Gastrocnemius medialis (tissue), 4 donors: ENCODE measurements at regions of chr6 and their contacts with region 1.

Region 1: DNA sequence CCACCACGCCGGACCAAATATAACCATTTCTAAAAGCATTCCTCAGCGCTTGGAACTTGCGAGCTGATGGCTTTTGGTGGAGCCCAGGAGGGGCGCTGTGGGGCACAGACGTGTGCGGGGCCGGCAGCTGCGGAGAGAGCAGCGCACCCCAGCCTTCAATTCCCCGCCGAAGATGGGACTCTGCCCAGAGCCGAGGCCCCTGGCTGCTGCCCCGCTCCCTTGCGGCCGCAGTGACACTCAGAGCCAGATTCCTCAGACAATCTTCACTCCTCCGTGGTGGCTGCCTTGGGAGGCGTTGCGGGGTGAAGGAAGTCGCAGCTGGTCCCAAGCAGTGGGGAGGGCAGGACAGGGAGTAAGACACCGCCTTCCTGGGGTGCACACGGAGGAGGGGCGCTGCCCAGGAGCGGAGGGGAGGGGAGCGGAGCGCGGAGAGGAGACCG is 87.7 kb downstream of the TMEM242 start:
- DNase-seq: peak in 1 of 2 donors; percentile 42
- ATAC-seq: peak; percentile 57 to 64
- H3K4me3 ChIP-seq: peak overlapping the region; percentile 57 to 70 (median 61)
- H3K27ac ChIP-seq: peak overlapping the region; percentile 8 to 53 (median 49)
- H3K4me1 ChIP-seq: peaks cover 19 to 26% of the 10 kb centered on the region in 2 donors
- H3K27me3 ChIP-seq: peaks cover 0 to 15% (median 0%) of the 10 kb centered on the region in 3 donors
- CTCF ChIP-seq: peak; percentile 25 to 77 (median 53)
- POLR2A ChIP-seq: no peak

Region 2: GRCh38 chr6:155314092-155314772 is 1921.4 kb before region 1 on chr6 and contains the start of gene TFB1M:
- in situ Hi-C with region 1: no loop called
- intact Hi-C with region 1: loop called (anchors 10 kb)
- DNase-seq: peak; percentile 98
- ATAC-seq: peak; percentile 90 to 91
- H3K4me3 ChIP-seq: peak within 1 kb of the TSS; percentile 84 to 95 (median 88)
- H3K27ac ChIP-seq: peak within 1 kb of the TSS; percentile 87 to 93 (median 91)
- H3K4me1 ChIP-seq: peaks cover 3 to 11% of the 10 kb centered on the region in 2 donors
- H3K27me3 ChIP-seq: no peaks in the 10 kb centered on the region
- CTCF ChIP-seq: no peak
- POLR2A ChIP-seq: peak; percentile 94
- total RNA-seq, gene TFB1M: 13.4 to 34.4 (median 29.2) TPM

Region 3: DNA sequence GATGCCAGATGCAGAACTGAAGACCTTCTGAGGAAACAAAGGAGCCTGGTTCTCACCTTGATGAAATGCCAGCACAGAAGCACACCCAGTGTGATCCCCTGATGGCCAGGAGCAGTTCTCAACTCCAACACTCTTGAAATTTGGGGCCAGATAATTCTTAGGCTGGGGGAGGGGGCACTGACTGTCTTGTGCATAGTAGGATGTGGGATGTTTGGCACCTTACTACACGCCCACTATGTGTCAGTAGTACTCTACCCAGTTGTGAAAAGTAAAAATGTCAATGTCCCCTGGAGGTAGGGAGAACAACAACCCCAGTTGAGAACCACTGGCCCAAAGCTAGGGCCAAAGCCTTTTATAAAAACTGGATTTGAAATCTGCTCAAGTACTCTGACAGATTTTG is 856.8 kb before region 1 on chr6:
- in situ Hi-C with region 1: no loop called
- intact Hi-C with region 1: no loop called
- DNase-seq: no peak
- ATAC-seq: no peak
- H3K4me3 ChIP-seq: no peak overlapping the region
- H3K27ac ChIP-seq: no peak overlapping the region
- H3K4me1 ChIP-seq: no peaks in the 10 kb centered on the region
- H3K27me3 ChIP-seq: no peaks in the 10 kb centered on the region
- CTCF ChIP-seq: no peak
- POLR2A ChIP-seq: no peak

Region 4: GRCh38 chr6:157059781-157060180 is 175.8 kb before region 1 on chr6:
- in situ Hi-C with region 1: no loop called
- intact Hi-C with region 1: no loop called
- DNase-seq: no peak
- ATAC-seq: peak in 1 of 2 donors; percentile 44
- H3K4me3 ChIP-seq: no peak overlapping the region
- H3K27ac ChIP-seq: no peak overlapping the region
- H3K4me1 ChIP-seq: peaks cover 11 to 16% of the 10 kb centered on the region in 2 donors
- H3K27me3 ChIP-seq: no peaks in the 10 kb centered on the region
- CTCF ChIP-seq: no peak
- POLR2A ChIP-seq: no peak

Region 5: DNA sequence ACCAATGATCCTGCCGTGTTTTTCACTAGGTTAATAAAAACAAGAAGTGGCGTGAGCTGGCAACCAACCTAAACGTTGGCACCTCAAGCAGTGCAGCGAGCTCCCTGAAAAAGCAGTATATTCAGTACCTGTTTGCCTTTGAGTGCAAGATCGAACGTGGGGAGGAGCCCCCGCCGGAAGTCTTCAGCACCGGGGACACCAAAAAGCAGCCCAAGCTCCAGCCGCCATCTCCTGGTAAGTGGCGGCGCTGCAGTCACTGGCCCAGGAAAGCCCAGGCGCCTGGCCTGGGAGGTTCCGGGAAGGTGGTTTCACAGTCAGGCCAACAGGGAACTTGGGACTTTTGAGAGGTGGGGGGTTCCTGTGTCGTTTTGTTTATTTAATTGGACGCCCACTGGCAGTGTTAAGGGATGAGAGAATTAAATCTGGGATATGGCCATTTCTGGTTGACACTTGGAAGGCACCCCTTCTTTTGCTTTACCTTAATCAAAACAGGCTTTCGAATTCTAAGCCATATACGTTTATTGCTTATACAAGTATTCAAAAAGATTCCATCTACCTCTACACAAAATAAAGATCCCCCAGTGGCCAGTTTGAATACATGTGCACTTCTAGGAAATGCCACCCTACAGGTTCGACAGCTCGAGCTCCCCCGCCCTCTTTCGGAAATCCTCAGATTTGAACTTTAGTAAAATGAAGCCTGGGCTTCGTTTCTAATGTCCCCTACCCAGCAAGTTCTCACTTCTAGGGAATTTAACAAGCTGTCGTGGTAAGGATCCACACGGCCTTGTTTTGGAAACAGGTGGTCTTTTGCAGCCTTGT is 51.2 kb before region 1 on chr6:
- in situ Hi-C with region 1: no loop called
- intact Hi-C with region 1: loop called (anchors 5 kb)
- DNase-seq: peak; percentile 41 to 65
- ATAC-seq: peak; percentile 22 to 40
- H3K4me3 ChIP-seq: no peak overlapping the region
- H3K27ac ChIP-seq: peak overlapping the region in 3 of 4 donors; percentile 9 to 46 (median 24)
- H3K4me1 ChIP-seq: peaks cover 26 to 27% of the 10 kb centered on the region in 2 donors
- H3K27me3 ChIP-seq: no peaks in the 10 kb centered on the region
- CTCF ChIP-seq: peak; percentile 83 to 92 (median 90)
- POLR2A ChIP-seq: no peak

Region 6: DNA sequence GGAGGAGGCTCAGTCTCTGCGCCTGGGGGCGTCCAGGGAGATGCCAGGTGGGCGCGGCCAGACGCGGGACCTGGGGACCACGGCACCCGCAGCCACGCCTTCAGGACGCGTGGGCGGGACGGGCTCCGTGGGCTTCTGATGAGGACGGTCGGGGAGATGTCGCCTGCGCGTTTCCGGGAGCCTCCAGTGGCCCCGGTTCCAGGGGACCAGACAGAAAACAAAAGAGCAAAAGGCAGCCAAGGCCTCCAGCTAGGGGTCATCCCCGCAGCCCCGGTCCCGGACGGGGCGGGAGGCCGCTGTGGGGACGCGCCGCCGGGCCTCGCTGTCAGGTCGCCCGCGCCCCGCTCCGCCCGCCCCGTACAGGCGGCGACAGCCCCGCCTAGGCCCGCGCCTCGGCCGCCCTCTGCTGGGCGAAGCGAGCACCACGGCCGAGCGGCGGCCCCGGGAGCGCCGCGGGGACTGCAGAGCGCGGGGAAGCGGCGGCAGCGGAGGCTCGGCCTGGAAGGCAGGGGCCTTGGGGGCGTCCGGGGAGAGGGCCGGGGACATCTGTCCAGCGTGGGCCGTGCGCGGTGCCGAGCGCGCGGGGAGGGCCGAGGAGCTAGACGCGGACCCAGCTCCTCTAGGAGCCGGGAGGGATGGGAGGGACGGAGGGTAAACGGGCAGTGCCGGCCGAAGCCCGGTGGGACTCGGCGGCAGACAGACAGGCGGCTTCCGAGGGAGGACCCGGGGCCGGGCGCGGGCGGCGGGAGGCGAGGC is 39.0 kb after region 1 on chr6:
- in situ Hi-C with region 1: no loop called
- intact Hi-C with region 1: loop called (anchors 1 kb)
- DNase-seq: peak; percentile 38 to 55
- ATAC-seq: peak; percentile 96
- H3K4me3 ChIP-seq: peak overlapping the region; percentile 58 to 89 (median 68)
- H3K27ac ChIP-seq: peak overlapping the region; percentile 59 to 77 (median 69)
- H3K4me1 ChIP-seq: peaks cover 3 to 7% of the 10 kb centered on the region in 2 donors
- H3K27me3 ChIP-seq: no peaks in the 10 kb centered on the region
- CTCF ChIP-seq: peak; percentile 23 to 99 (median 95)
- POLR2A ChIP-seq: peak in 1 of 2 donors; percentile 18

Region 7: DNA sequence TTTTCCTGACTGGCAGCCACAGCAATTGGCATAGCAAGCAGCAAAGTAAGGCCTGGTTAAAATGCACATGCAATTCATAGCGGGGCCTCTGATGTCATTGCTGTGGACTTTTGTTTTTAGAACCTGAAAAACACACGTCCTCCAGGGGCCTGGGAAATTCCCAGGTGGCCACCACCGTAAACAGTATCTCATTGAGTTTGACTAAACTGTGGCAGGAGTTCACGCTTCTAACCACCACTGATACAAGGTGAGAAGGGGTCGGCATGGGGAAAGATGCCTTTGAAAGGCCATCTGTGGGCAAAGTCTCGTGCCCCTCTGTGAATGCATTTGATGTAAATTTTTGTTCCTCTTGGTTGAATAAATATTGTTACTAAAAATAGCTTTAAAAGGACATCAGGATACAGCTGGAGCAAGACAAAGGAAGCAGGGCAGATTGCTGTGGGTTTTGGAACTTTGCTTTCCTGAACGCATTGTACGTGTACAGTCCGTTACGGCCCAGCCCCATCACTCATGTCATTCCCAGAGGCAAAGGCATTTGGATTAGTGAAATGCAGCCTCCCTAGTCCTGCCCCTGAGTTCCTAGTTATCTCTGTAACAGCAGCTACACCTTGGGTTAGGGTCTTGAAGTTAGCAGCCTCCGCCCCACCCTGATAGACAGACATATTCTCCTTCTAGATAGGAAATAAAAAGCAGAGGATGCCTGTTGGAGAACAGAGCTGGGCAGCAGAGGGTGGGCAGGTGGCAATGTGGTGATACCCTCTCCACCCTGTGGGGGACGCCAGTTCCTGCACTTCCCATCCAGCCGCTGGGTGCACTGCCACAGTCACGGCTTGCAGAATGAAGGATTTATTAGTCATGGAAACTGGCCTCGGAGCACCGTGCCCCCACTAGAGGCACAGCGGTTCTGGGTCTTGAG is 225.6 kb after region 1 on chr6:
- in situ Hi-C with region 1: no loop called
- intact Hi-C with region 1: no loop called
- DNase-seq: no peak
- ATAC-seq: no peak
- H3K4me3 ChIP-seq: no peak overlapping the region
- H3K27ac ChIP-seq: peak overlapping the region in 2 of 4 donors; percentile 40 to 45
- H3K4me1 ChIP-seq: peaks cover 7 to 10% of the 10 kb centered on the region in 2 donors
- H3K27me3 ChIP-seq: no peaks in the 10 kb centered on the region
- CTCF ChIP-seq: no peak
- POLR2A ChIP-seq: no peak

Region 8: DNA sequence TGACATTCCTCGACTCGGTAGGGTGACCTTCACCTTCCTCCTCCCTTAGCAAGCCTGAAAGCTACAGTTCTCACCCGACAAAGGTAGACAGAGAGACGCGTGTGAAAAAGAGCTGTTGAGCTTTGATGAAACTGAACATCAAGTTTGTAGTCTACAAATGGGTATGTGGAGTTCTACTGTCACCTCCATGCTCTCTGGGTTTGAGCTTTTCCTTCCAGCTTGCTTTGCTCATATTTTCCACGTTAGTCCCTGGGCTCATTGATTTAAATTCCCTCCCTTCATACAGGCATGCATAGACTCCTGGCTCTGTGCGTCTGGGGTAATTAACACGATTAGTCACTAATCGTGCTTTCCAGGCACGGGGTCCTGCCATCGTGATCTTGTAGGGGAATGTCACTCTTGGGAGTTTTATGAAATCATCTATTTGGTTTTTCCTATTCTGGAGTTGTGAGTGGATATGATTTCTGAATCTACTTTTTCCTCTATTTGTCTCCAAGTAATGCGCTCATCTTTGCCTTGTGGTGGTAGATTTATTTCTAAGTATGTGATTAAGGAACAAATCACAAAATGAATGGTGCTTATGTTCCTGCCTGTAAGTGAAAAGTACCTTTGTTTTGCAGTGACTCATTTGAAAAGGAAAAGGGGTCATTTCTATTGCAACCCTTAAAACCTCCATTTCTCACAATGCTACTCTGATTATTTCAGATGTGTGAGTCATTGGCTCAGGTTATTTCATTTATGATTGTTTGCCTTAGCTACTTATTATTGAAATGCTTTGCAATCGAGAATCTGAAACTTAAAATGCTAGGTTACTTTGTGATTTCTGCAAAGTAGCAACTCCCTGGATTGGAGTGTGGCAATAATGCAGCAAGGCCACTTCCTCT is 300.0 kb after region 1 on chr6:
- in situ Hi-C with region 1: no loop called
- intact Hi-C with region 1: loop called (anchors 10 kb)
- DNase-seq: no peak
- ATAC-seq: no peak
- H3K4me3 ChIP-seq: no peak overlapping the region
- H3K27ac ChIP-seq: peak overlapping the region; percentile 4 to 59 (median 32)
- H3K4me1 ChIP-seq: peaks cover 50 to 66% of the 10 kb centered on the region in 2 donors
- H3K27me3 ChIP-seq: no peaks in the 10 kb centered on the region
- CTCF ChIP-seq: no peak
- POLR2A ChIP-seq: no peak

Region 9: GRCh38 chr6:158644231-158645063 is 1408.8 kb after region 1 on chr6 and contains the start of gene DYNLT1:
- in situ Hi-C with region 1: no loop called
- intact Hi-C with region 1: loop called (anchors 10 kb)
- DNase-seq: peak; percentile 88 to 93
- ATAC-seq: peak; percentile 63 to 67
- H3K4me3 ChIP-seq: peak within 1 kb of the TSS; percentile 87 to 99 (median 96)
- H3K27ac ChIP-seq: peak within 1 kb of the TSS; percentile 97 to 100 (median 98)
- H3K4me1 ChIP-seq: peaks cover 47 to 51% of the 10 kb centered on the region in 2 donors
- H3K27me3 ChIP-seq: no peaks in the 10 kb centered on the region
- CTCF ChIP-seq: no peak
- POLR2A ChIP-seq: peak; percentile 100
- total RNA-seq, gene DYNLT1: 62.8 to 94.7 (median 67.3) TPM